ENCODE measurements at regions of chr14 and their contacts with region 1.

Region 1: GRCh38 chr14:98323836-98324235 is 948.2 kb downstream of the BCL11B start:
- DNase-seq: no peak
- ATAC-seq: no peak
- H3K4me3 ChIP-seq: no peak overlapping the region
- H3K27ac ChIP-seq: no peak overlapping the region
- H3K4me1 ChIP-seq: no peaks in the 10 kb centered on the region
- H3K27me3 ChIP-seq: no peaks in the 10 kb centered on the region
- CTCF ChIP-seq: no peak
- EP300 ChIP-seq: no peak
- POLR2A ChIP-seq: no peak
- RAD21 ChIP-seq: no peak

Region 2: GRCh38 chr14:98210045-98210672 is 113.7 kb before region 1 on chr14:
- CTCF ChIA-PET with region 1: no interaction called
- POLR2A ChIA-PET with region 1: no interaction called
- RAD21 ChIA-PET with region 1: interaction called, 4 read pairs
- SMC1A ChIA-PET with region 1: interaction called, 10 read pairs
- in situ Hi-C with region 1: no loop called
- intact Hi-C with region 1: no loop called
- DNase-seq: no peak
- ATAC-seq: peak; percentile 47
- H3K4me3 ChIP-seq: no peak overlapping the region
- H3K27ac ChIP-seq: no peak overlapping the region
- H3K4me1 ChIP-seq: peaks cover 7% of the 10 kb centered on the region
- H3K27me3 ChIP-seq: no peaks in the 10 kb centered on the region
- CTCF ChIP-seq: no peak
- EP300 ChIP-seq: no peak
- POLR2A ChIP-seq: no peak
- RAD21 ChIP-seq: 0 out of 2 replicates have a peak, but pooled peaks have one; percentile 0

Region 3: GRCh38 chr14:98227000-98227726 is 96.7 kb before region 1 on chr14:
- CTCF ChIA-PET with region 1: interaction called, 5 read pairs
- POLR2A ChIA-PET with region 1: interaction called, 3 read pairs
- RAD21 ChIA-PET with region 1: interaction called, 13 read pairs
- SMC1A ChIA-PET with region 1: interaction called, 19 read pairs
- in situ Hi-C with region 1: no loop called
- intact Hi-C with region 1: no loop called
- DNase-seq: peak; percentile 51
- ATAC-seq: peak; percentile 95
- H3K4me3 ChIP-seq: no peak overlapping the region
- H3K27ac ChIP-seq: peak overlapping the region; percentile 75
- H3K4me1 ChIP-seq: peaks cover 5% of the 10 kb centered on the region
- H3K27me3 ChIP-seq: no peaks in the 10 kb centered on the region
- CTCF ChIP-seq: no peak
- EP300 ChIP-seq: peak in 1 of 2 experiments; percentile 54; a peak in 1 of 4 replicates
- POLR2A ChIP-seq: no peak
- RAD21 ChIP-seq: peak; percentile 13; the same call in 1 of the 2 replicates

Region 4: DNA sequence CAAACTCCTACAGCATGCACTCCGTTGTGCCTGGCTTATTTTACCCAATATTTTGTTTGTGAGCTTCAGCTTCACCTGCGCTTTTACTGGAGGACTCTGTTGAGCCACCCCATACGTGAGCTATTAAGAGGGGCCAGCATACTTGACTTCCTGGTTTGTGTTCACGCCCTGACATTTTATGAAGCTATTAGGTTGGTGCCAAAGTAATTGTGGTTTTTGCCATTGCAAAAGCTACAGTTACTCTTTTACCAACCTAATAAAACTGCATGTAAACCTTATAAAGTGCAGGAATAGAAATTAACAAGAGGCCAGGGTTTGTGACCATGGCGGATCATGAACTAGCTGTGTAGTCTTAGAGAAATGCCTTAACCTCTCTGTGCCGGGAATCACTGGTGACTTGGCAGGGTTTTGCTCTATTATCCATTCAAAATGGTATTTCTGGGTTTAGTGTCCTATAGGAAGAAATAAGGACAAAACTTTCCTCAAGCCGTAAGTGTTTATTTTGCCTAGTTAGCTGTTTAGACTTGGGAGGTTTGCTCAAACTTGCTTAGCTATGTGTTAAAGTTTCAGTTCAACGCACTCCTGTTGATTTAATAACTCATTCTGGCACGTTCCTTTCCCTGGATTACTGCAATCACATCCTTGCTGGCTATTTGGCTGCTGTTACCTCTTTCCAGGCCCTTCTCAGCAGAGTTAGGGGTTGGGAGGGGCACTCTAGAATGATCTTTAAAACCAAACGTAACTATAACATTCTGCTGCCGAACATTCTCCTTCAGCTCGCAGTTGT is 79.5 kb before region 1 on chr14:
- CTCF ChIA-PET with region 1: no interaction called
- POLR2A ChIA-PET with region 1: no interaction called
- RAD21 ChIA-PET with region 1: interaction called, 10 read pairs
- SMC1A ChIA-PET with region 1: interaction called, 4 read pairs
- in situ Hi-C with region 1: no loop called
- intact Hi-C with region 1: no loop called
- DNase-seq: no peak
- ATAC-seq: no peak
- H3K4me3 ChIP-seq: no peak overlapping the region
- H3K27ac ChIP-seq: no peak overlapping the region
- H3K4me1 ChIP-seq: no peaks in the 10 kb centered on the region
- H3K27me3 ChIP-seq: no peaks in the 10 kb centered on the region
- CTCF ChIP-seq: no peak
- EP300 ChIP-seq: no peak
- POLR2A ChIP-seq: no peak
- RAD21 ChIP-seq: no peak

Region 5: DNA sequence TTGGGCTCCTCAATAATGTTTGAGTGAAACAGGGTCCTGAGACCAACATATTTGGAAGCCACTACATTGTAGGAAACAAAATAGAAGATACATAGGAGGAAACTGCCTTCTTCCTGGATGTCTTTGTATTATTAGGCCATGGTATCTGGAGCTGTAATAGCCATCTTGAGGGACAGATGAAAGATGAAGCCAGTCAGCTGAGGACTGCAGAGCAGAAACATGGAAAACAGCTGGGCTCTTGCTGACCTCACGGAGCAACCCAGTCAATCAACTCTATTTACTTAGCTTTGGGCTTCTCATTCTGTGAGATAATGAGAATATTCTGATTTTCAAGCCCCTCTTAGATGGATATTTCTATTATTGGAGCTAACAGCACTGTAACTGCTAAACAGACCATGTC is 14.2 kb before region 1 on chr14:
- CTCF ChIA-PET with region 1: interaction called, 6 read pairs
- POLR2A ChIA-PET with region 1: no interaction called
- RAD21 ChIA-PET with region 1: interaction called, 7 read pairs
- SMC1A ChIA-PET with region 1: interaction called, 17 read pairs
- in situ Hi-C with region 1: no loop called
- intact Hi-C with region 1: no loop called
- DNase-seq: no peak
- ATAC-seq: no peak
- H3K4me3 ChIP-seq: no peak overlapping the region
- H3K27ac ChIP-seq: no peak overlapping the region
- H3K4me1 ChIP-seq: no peaks in the 10 kb centered on the region
- H3K27me3 ChIP-seq: no peaks in the 10 kb centered on the region
- CTCF ChIP-seq: no peak
- EP300 ChIP-seq: no peak
- POLR2A ChIP-seq: no peak
- RAD21 ChIP-seq: no peak

Region 6: GRCh38 chr14:98334186-98334585 is 10.3 kb after region 1 on chr14:
- CTCF ChIA-PET with region 1: interaction called, 5 read pairs
- POLR2A ChIA-PET with region 1: interaction called, 3 read pairs
- RAD21 ChIA-PET with region 1: interaction called, 3 read pairs
- SMC1A ChIA-PET with region 1: interaction called, 23 read pairs
- in situ Hi-C with region 1: no loop called
- intact Hi-C with region 1: no loop called
- DNase-seq: no peak
- ATAC-seq: no peak
- H3K4me3 ChIP-seq: no peak overlapping the region
- H3K27ac ChIP-seq: no peak overlapping the region
- H3K4me1 ChIP-seq: no peaks in the 10 kb centered on the region
- H3K27me3 ChIP-seq: no peaks in the 10 kb centered on the region
- CTCF ChIP-seq: no peak
- EP300 ChIP-seq: no peak
- POLR2A ChIP-seq: no peak
- RAD21 ChIP-seq: no peak

Region 7: DNA sequence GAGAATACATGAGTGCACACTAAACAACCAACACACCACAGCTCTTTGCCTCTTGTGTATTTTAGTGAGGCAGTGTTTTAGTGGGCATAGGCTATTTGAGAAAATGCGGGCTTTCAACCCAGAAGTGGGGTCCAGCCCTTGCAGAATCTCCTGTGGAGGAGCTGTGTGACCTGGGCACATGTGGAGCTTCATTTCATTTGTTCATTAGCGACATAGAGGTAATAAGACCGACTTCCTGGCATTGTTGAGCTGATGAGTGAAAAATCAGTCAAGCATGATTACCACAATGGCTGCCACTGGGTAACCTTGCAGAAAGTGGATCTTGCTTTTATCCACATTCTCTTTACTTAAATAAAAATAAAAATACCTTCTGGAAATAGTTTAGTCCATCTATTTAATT is 24.7 kb after region 1 on chr14:
- CTCF ChIA-PET with region 1: interaction called, 6 read pairs
- POLR2A ChIA-PET with region 1: interaction called, 7 read pairs
- RAD21 ChIA-PET with region 1: interaction called, 12 read pairs
- SMC1A ChIA-PET with region 1: interaction called, 9 read pairs
- in situ Hi-C with region 1: no loop called
- intact Hi-C with region 1: no loop called
- DNase-seq: no peak
- ATAC-seq: peak; percentile 31; the same call in 2 of the 3 replicates
- H3K4me3 ChIP-seq: no peak overlapping the region
- H3K27ac ChIP-seq: no peak overlapping the region
- H3K4me1 ChIP-seq: no peaks in the 10 kb centered on the region; the same call in 1 of the 2 replicates
- H3K27me3 ChIP-seq: no peaks in the 10 kb centered on the region
- CTCF ChIP-seq: no peak
- EP300 ChIP-seq: no peak
- POLR2A ChIP-seq: no peak
- RAD21 ChIP-seq: no peak